ENCODE measurements at regions of chr4 and their contacts with region 1.

Region 1: DNA sequence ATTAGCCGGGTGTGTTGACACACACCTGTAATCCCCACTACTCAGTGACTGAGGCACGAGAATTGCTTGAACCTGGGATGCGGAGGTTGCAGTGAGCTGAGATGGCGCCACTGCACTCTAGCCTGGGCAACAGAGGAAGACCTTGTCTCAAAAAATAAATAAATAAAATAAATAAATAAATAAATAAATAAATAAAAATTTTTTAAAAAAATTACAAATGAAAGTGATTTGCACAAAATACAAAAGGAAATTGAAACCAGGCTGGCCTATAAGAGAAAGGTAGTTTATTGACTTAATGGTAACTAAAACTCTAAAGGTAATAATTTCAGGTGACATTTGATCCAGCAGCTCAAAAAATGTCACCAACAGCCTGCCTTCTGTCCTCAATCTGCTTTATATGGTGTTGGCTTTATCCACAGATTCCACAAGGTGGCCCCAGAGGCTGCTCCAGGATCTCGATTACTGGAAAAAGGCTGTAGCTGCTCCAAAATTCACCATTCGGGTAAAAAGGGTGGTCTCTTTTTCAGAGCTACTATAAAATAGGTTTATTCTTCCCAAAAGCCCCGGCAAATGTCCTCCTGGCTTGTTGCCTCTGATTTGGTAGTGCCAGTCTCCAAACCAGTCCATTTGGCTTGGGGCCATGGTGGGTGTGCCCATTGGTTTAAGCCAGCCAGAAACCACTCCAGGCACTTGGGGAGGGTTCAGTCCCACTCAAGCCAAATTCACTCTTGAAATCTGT is 61.4 kb upstream of the TRIM2 start:
- DNase-seq: peak; percentile 79 to 91
- ATAC-seq: peak; percentile 78

Region 2: DNA sequence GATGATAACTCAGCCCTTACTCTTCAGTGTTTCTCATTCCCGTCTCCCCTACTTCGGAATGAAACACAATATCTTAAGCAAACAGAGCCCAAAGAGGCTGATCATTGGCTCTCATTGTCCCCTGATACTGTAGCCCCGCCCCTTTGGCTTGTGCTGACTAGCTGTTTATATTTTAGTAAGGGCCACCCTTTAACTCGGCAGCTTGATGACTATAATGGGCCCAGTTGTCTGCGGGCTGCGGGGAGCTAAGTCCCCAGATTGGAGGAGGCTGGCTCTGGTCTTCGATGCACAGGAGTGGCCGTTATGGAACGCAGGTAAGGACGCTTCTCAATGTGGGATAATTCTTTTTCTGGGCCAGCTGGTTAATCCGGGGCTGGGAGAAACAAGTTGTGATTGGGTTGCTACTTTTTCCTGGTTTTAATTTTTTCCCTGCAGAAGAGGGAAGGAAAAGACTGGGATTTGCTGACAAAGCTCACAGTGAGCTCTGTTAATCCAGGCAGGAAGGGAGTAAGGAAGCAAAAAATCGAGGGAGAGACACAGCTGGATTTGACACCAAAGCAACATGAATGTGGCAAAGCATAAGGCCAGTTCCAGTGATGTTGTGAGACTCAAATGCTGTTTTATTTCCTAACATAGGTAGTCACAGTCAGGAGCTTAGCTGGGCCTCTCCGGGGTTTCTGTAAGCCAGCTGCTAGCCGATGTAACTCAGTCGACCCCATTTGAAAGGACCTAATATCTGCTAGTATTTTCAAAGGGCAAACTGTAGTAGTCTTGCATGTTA is 61.6 kb after region 1 on chr4 and contains the start of gene TRIM2:
- intact Hi-C with region 1: loop called in 1 of 2 experiments (anchors 10 kb)
- DNase-seq: peak; percentile 85 to 92
- ATAC-seq: peak; percentile 61
- total RNA-seq, gene TRIM2: 123 to 145 TPM